ENCODE measurements at regions of chr10 and their contacts with region 1.

Region 1: DNA sequence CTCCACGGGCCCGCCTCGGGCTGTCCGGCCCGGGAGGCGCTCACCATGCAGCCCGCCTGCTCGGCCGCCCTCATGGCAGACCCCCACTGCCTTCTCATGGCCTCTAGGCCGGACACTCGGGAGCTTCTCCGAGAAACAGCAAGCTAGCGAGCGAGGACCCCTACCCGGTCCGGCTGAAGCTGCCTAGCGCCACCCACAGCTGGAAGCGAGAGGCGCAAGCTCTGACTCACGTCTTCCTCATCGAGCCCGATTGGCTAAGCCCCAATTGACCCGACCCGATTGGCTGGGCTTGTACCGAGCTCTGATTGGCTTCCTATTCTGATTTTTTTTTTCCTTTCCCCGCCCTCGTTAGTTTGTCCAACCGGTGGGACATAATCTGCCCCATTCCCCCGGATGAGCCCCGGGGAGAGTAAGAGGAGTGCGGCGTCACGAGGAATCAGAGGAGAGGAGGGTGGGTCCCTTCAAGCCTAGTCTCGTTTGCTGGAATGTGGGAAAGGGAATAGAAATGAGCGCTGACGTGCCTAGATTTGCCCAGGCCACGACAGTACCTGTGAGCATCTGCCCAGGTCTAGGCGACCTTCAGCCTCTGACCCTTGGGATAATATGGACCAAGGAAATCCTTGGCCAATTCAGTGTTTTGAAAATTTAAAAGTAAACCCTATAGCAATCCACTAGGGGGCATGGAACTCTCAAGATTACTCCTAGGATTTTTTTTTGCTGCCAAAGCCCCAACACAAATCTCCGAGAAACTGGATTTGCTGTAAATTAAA is at the start of gene TYSND1:
- DNase-seq: peak; percentile 88 to 97
- ATAC-seq: peak; percentile 83 to 94 (median 84)
- H3K4me3 ChIP-seq: peak within 1 kb of the TSS; percentile 70
- H3K4me3 Mint-ChIP-seq: peak within 1 kb of the TSS; percentile 92
- H3K27ac ChIP-seq: peak within 1 kb of the TSS; percentile 67
- H3K27ac Mint-ChIP-seq: peak within 1 kb of the TSS; percentile 90
- H3K4me1 ChIP-seq: peaks cover 25% of the 10 kb centered on the region
- H3K4me1 Mint-ChIP-seq: peaks cover 32 to 39% of the 10 kb centered on the region in 2 donors
- H3K27me3 ChIP-seq: no peaks in the 10 kb centered on the region
- H3K27me3 Mint-ChIP-seq: no peaks in the 10 kb centered on the region
- CTCF ChIP-seq: peak; percentile 60
- total RNA-seq, gene TYSND1: 12.0 to 17.9 (median 12.4) TPM

Region 2: GRCh38 chr10:70132098-70133029 is 14.3 kb before region 1 on chr10 and contains the start of gene AIFM2:
- intact Hi-C with region 1: no loop called
- DNase-seq: peak; percentile 33 to 65
- ATAC-seq: peak; percentile 54 to 90 (median 87)
- H3K4me3 ChIP-seq: peak within 1 kb of the TSS; percentile 63
- H3K4me3 Mint-ChIP-seq: peak within 1 kb of the TSS; percentile 95
- H3K27ac ChIP-seq: no peak within 1 kb of the TSS
- H3K27ac Mint-ChIP-seq: peak within 1 kb of the TSS; percentile 69 to 83
- H3K4me1 ChIP-seq: peaks cover 20% of the 10 kb centered on the region
- H3K4me1 Mint-ChIP-seq: peaks cover 24 to 38% of the 10 kb centered on the region in 2 donors
- H3K27me3 ChIP-seq: no peaks in the 10 kb centered on the region
- H3K27me3 Mint-ChIP-seq: no peaks in the 10 kb centered on the region
- CTCF ChIP-seq: no peak
- total RNA-seq, gene AIFM2: 3.7 to 4.2 (median 3.9) TPM

Region 3: GRCh38 chr10:70162892-70163201 is 16.2 kb after region 1 on chr10:
- intact Hi-C with region 1: loop called (anchors 2 kb)
- DNase-seq: peak in 1 of 2 donors; percentile 74
- ATAC-seq: peak; percentile 92
- H3K4me3 ChIP-seq: no peak overlapping the region
- H3K4me3 Mint-ChIP-seq: peak overlapping the region; percentile 84
- H3K27ac ChIP-seq: peak overlapping the region; percentile 52
- H3K27ac Mint-ChIP-seq: peak overlapping the region; percentile 78 to 81
- H3K4me1 ChIP-seq: peaks cover 29% of the 10 kb centered on the region
- H3K4me1 Mint-ChIP-seq: peaks cover 57 to 67% of the 10 kb centered on the region in 2 donors
- H3K27me3 ChIP-seq: no peaks in the 10 kb centered on the region
- H3K27me3 Mint-ChIP-seq: no peaks in the 10 kb centered on the region
- CTCF ChIP-seq: no peak

Region 4: GRCh38 chr10:70169649-70170364 is 23.1 kb after region 1 on chr10:
- intact Hi-C with region 1: loop called (anchors 1 kb)
- DNase-seq: peak in 1 of 2 donors; percentile 42
- ATAC-seq: peak; percentile 24 to 37 (median 25)
- H3K4me3 ChIP-seq: peak overlapping the region; percentile 86
- H3K4me3 Mint-ChIP-seq: peak overlapping the region; percentile 99
- H3K27ac ChIP-seq: peak overlapping the region; percentile 92
- H3K27ac Mint-ChIP-seq: peak overlapping the region; percentile 97 to 98
- H3K4me1 ChIP-seq: peaks cover 53% of the 10 kb centered on the region
- H3K4me1 Mint-ChIP-seq: peaks cover 54 to 56% of the 10 kb centered on the region in 2 donors
- H3K27me3 ChIP-seq: no peaks in the 10 kb centered on the region
- H3K27me3 Mint-ChIP-seq: no peaks in the 10 kb centered on the region
- CTCF ChIP-seq: no peak

Measured in natural killer cell (primary cell).